ENCODE measurements at regions of chr7 and their contacts with region 1.

Region 1: DNA sequence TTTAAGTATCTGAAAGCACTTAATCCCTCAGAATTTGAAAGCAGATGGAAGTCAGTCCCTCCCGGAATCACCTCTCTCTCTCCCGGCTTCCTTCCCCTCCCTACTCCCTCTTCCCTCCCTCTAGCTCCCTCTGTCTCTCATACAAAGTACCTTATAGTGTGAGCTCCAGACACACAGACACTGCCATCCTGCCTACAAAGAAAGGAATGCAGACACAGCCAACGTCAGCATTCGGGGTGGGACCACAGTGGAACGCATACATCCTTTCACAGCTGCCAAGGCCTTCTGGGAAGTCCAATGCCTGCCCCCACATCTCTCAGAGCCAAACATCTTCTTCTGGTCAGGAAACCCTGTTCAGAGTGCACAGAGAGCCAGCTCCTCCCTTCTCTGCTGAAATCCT is 9.3 kb downstream of the NOD1 start:
- DNase-seq: peak; percentile 81 to 94 (median 84)
- ATAC-seq: peak; percentile 80 to 87 (median 86)
- H3K4me3 ChIP-seq: peak overlapping the region in 6 of 12 donors; percentile 5 to 27 (median 22)
- H3K27ac ChIP-seq: peak overlapping the region; percentile 53 to 98 (median 80)
- H3K4me1 ChIP-seq: peaks cover 21 to 100% (median 95%) of the 10 kb centered on the region in 12 donors
- H3K27me3 ChIP-seq: no peaks in the 10 kb centered on the region
- CTCF ChIP-seq: peak in 11 of 12 donors; percentile 6 to 65 (median 44)
- POLR2A ChIP-seq: no peak

Region 2: GRCh38 chr7:30284298-30285066 is 184.8 kb before region 1 on chr7 and contains the start of gene ZNRF2:
- intact Hi-C with region 1: loop called in 2 of 10 experiments (anchors 5 to 10 kb)
- DNase-seq: peak; percentile 98 to 100 (median 99)
- ATAC-seq: peak; percentile 96 to 99 (median 98)
- H3K4me3 ChIP-seq: peak within 1 kb of the TSS; percentile 54 to 98 (median 85)
- H3K27ac ChIP-seq: peak within 1 kb of the TSS; percentile 95 to 99 (median 98)
- H3K4me1 ChIP-seq: peaks cover 0 to 44% (median 23%) of the 10 kb centered on the region in 12 donors
- H3K27me3 ChIP-seq: no peaks in the 10 kb centered on the region
- CTCF ChIP-seq: peak; percentile 19 to 80 (median 54)
- POLR2A ChIP-seq: peak in 1 of 2 donors; percentile 79
- total RNA-seq, gene ZNRF2: 7.3 to 15.2 (median 10.9) TPM

Region 3: GRCh38 chr7:30504347-30505173 is 35.3 kb after region 1 on chr7 and contains the start of gene GGCT:
- intact Hi-C with region 1: loop called in 1 of 10 experiments (anchors 5 kb)
- DNase-seq: peak; percentile 98 to 100 (median 99)
- ATAC-seq: peak; percentile 99 to 100 (median 100)
- H3K4me3 ChIP-seq: peak within 1 kb of the TSS; percentile 62 to 99 (median 80)
- H3K27ac ChIP-seq: peak within 1 kb of the TSS; percentile 69 to 94 (median 88)
- H3K4me1 ChIP-seq: peaks cover 0 to 31% (median 12%) of the 10 kb centered on the region in 12 donors
- H3K27me3 ChIP-seq: no peaks in the 10 kb centered on the region
- CTCF ChIP-seq: no peak
- POLR2A ChIP-seq: peak in 1 of 2 donors; percentile 79
- total RNA-seq, gene GGCT: 14.1 to 23.6 (median 17.8) TPM

Measured in heart left ventricle (tissue), 16 donors.